Activated CD4-positive, alpha-beta T cell treated with anti-CD3 and anti-CD28 coated beads, Interleukin-2, amount 10 ng/mL, durations not matched to agents 24 days and 14 days (primary cell): ENCODE measurements at regions of chr13 and their contacts with region 1.

Region 1: DNA sequence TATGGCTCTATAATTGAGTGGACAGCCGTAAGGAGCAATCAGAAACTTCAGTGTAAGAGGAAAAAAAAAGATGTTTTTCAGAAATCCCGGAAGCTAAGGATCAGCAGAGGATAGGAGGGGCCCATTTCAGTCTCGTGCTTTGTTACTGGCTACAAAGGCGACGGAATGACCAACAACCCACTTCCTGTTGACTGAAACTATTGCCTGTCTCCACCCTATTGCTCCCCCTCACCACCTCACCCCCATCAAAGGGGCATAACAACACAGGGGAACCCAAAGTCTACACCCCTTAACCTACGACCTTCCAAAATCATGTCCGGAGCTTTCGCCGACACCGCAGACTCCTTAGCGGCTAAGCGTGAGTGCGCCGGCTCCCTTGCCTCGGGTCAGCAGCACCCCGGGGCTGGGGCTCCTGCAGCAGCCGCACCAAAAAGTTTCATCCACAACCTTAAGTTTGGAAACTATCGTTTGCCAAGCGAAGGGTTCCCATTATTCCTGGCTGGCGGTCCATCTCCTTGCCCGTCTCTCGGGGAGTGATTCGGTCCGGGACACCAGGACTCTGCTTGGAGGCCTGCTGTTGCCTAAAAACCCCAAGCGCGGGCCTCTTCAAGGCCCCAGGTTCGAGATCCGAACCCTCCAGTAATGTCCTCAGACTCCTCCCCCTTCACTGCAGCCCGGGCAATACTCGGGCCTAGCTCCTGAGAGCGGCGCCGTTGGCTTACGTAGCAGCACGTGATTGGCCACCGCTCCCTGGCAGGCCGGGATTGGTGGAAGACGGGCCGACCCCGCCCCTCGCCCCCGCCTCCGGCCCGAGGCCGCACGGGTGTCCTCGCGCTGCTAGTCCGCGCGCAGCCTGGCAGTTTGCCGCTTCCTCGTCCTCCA is at the start of gene TPP2:
- DNase-seq: peak; percentile 100
- H3K4me3 Mint-ChIP-seq: peak within 1 kb of the TSS; percentile 97
- H3K27ac Mint-ChIP-seq: peak within 1 kb of the TSS; percentile 99
- H3K4me1 Mint-ChIP-seq: peaks cover 48% of the 10 kb centered on the region
- H3K27me3 Mint-ChIP-seq: no peaks in the 10 kb centered on the region
- total RNA-seq, gene TPP2: 77.3 and 80.0 TPM in 2 replicates

Region 2: DNA sequence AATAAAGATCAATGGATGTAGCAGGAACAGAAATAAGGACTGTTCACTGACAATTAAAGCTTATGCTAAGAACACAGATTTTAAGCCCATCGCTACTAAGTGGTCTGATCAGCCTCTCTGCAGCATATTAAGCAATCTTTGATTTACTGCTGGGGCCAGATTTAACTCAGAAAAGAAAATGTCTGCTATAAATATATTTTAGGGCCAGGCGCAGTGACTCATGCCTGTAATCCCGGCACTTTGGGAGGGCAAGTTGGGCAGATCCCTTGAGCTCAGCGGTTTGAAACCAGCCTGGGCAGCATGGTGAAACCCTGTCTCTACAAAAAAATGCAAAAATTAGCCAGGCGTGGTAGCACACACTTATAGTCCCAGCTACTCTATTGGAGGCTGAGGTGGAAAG is 55.5 kb after region 1 on chr13:
- intact Hi-C with region 1: loop called (anchors 2 kb)
- DNase-seq: no peak
- H3K4me3 Mint-ChIP-seq: no peak overlapping the region
- H3K27ac Mint-ChIP-seq: no peak overlapping the region
- H3K4me1 Mint-ChIP-seq: peaks cover 5% of the 10 kb centered on the region
- H3K27me3 Mint-ChIP-seq: no peaks in the 10 kb centered on the region

Region 3: GRCh38 chr13:102773441-102774215 is 177.2 kb after region 1 on chr13 and contains the start of gene TEX30:
- intact Hi-C with region 1: loop called (anchors 1 kb)
- DNase-seq: peak; percentile 98
- H3K4me3 Mint-ChIP-seq: peak within 1 kb of the TSS; percentile 87
- H3K27ac Mint-ChIP-seq: peak within 1 kb of the TSS; percentile 93
- H3K4me1 Mint-ChIP-seq: peaks cover 49% of the 10 kb centered on the region
- H3K27me3 Mint-ChIP-seq: no peaks in the 10 kb centered on the region
- total RNA-seq, gene TEX30: 55.4 and 65.6 TPM in 2 replicates